Left lung (tissue), 14 donors: ENCODE measurements at regions of chr12 and their contacts with region 1.

Region 1: DNA sequence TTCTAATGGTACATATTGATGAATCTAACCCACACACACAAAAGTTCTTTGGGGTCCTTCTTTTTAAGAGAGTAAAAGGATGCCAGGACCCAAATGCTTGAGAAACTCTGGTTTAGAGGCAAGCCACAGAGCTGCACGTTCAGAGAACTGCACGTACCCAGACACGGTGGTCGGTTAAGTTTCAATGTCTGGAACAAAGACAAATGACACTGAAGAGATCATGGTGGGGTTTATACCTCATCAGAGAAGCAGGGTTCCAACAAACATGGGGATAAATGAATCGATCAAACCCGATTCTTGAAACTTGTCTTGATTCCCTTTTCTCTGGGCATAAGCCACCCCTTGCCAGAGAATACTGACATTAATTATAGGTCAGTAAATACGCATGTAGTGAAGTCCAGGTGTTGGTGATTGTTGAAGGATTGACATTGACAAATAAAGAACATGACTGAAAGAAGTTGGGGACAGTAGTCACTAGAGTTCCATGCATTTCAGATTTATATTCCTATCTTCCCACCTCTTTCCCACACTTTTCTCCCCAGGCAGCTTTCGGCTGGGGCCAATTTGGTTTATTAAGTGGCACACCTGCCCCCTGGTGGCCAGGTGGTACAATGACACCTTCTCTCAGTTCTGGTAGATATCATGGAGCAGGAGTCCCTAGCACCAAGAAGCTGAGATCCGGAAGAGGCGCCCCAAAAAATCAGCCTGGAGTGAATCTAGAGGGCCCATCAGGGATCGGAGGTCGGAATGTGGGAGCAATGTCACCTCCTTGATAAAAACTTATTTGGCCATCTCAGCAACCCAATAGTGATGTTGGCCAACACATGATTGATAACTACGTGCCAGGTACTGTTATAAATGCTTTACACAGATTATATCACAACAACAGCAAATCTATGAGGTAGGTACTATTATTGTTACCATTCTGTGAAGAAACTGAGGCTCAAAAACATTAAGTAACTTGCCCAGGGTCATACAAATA is 17.8 kb upstream of the HDAC7 start:
- DNase-seq: peak in 1 of 4 donors; percentile 66
- ATAC-seq: peak; percentile 85
- H3K4me3 ChIP-seq: no peak overlapping the region
- H3K27ac ChIP-seq: no peak overlapping the region
- H3K4me1 ChIP-seq: peaks cover 6 to 32% of the 10 kb centered on the region in 2 donors
- H3K27me3 ChIP-seq: no peaks in the 10 kb centered on the region
- CTCF ChIP-seq: peak; percentile 75 to 93

Region 2: DNA sequence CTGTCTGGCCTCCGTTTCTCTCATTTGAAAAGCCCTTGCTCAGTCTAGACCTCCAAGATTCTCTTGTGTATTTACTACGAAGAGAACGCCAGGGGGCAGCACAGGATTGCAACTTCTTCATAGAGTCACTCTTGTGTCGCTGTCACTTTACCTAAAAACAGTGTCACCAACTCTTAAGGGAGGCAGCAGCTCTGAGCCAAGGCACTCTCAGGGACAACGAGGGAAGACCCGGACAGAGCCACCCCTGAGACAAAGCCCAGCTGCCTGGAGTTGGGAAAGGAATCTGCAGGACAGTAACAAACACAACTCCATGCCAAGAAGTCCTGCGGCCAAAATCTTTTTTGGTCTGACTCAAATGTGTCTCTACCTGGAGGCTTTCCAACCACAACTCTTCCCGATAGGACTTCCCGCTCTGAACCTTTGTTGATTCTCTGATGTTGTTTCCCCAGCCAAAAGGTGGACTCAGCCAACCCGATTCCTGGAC is 122.0 kb before region 1 on chr12:
- intact Hi-C with region 1: loop called in 1 of 2 experiments (anchors 2 kb)
- DNase-seq: peak in 3 of 4 donors; percentile 71 to 83 (median 78)
- ATAC-seq: peak; percentile 75
- H3K4me3 ChIP-seq: no peak overlapping the region
- H3K27ac ChIP-seq: no peak overlapping the region
- H3K4me1 ChIP-seq: peaks cover 19 to 36% of the 10 kb centered on the region in 2 donors
- H3K27me3 ChIP-seq: no peaks in the 10 kb centered on the region
- CTCF ChIP-seq: peak; percentile 76 to 82

Region 3: DNA sequence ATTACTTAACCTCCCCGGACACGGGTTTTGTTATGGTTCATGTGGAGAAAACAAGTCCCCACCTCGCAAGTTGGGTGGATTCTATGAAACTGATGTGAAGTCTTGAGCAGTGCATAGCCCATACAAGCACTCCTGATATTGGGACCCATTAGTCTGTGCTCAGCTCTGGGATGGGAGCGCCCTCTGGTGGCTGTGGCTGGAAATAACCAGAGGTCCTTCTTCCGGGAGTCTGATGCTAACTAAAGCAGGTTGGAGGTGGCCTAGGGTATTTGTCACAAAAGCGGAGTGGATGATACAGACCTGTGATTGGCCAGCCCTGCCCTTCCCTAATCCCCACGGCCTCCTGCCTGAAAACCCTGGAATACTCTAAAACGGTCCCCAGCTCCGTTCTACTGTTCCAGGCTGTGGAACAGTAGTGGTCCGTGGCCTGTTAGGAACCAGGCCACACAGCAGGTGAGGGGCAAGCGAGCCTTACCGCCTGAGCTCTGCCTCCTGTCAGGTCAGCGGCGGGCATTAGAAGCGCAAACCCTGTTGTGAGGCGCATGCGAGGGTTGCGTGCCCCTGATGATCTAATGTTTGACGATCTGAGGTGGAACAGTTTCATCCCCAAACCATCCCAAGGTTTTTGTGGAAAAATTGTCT is 58.1 kb before region 1 on chr12:
- intact Hi-C with region 1: loop called in 1 of 2 experiments (anchors 10 kb)
- DNase-seq: peak; percentile 83 to 94 (median 89)
- ATAC-seq: peak; percentile 85
- H3K4me3 ChIP-seq: no peak overlapping the region
- H3K27ac ChIP-seq: no peak overlapping the region
- H3K4me1 ChIP-seq: peaks cover 11 to 52% of the 10 kb centered on the region in 2 donors
- H3K27me3 ChIP-seq: no peaks in the 10 kb centered on the region
- CTCF ChIP-seq: peak; percentile 88 to 93

Region 4: DNA sequence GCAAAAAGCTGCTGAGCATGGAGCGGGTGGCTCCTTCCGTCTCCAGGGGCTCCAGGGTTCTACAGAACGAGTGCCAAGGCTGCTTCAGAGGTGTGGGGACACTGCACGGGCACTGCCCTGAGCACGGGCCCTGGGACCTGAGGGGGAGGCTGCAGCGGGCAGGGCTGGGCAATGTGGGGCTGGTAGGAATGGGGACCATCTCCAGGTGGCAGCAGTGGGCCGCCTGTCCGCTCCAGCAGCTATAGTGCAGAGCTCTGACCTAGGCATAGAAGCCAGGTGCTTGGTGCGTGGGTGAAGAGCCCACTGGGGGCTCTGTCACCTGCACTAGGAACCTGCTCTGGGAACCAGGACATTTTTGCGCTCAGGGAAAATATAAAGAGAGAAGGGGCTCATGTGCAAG is 40.0 kb before region 1 on chr12:
- intact Hi-C with region 1: loop called in 1 of 2 experiments (anchors 5 kb)
- DNase-seq: no peak
- ATAC-seq: peak; percentile 15
- H3K4me3 ChIP-seq: no peak overlapping the region
- H3K27ac ChIP-seq: no peak overlapping the region
- H3K4me1 ChIP-seq: peaks cover 22 to 35% of the 10 kb centered on the region in 2 donors
- H3K27me3 ChIP-seq: no peaks in the 10 kb centered on the region
- CTCF ChIP-seq: peak in 1 of 2 donors; percentile 12